ENCODE measurements at regions of chr6 and their contacts with region 1.

Region 1: DNA sequence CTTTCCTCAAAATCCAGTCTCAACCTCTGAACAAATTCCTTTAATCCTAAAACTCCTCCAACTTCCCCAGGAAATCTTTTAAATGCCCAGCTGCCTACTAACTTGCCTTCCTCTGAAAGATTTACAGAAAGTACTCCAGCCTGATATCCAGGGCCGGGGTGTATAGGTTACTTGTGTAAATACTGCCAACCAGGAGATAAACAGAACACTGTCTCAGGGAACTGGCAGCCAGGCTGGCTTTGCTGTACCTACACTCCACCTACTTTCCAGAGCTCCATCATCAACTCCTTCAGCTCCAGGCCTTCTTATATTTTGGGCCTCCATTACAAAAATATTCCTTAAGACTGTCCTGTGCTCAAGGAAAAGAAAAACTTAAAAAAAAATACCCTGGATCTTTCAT is 85.9 kb downstream of the CEP162 start:
- DNase-seq: no peak
- ATAC-seq: no peak
- H3K4me3 ChIP-seq: no peak overlapping the region
- H3K4me3 Mint-ChIP-seq: no peak overlapping the region
- H3K27ac ChIP-seq: no peak overlapping the region
- H3K27ac Mint-ChIP-seq: no peak overlapping the region
- H3K4me1 ChIP-seq: no peaks in the 10 kb centered on the region
- H3K4me1 Mint-ChIP-seq: no peaks in the 10 kb centered on the region
- H3K27me3 ChIP-seq: no peaks in the 10 kb centered on the region
- H3K27me3 Mint-ChIP-seq: no peaks in the 10 kb centered on the region
- CTCF ChIP-seq: no peak

Region 2: GRCh38 chr6:83092756-83093399 is 1048.6 kb before region 1 on chr6:
- CTCF ChIA-PET with region 1: no interaction called
- POLR2A ChIA-PET with region 1: no interaction called
- intact Hi-C with region 1: no loop called
- DNase-seq: no peak
- ATAC-seq: no peak
- H3K4me3 ChIP-seq: no peak overlapping the region
- H3K4me3 Mint-ChIP-seq: no peak overlapping the region
- H3K27ac ChIP-seq: no peak overlapping the region
- H3K27ac Mint-ChIP-seq: no peak overlapping the region
- H3K4me1 ChIP-seq: no peaks in the 10 kb centered on the region
- H3K4me1 Mint-ChIP-seq: peaks cover 14% of the 10 kb centered on the region
- H3K27me3 ChIP-seq: no peaks in the 10 kb centered on the region
- H3K27me3 Mint-ChIP-seq: no peaks in the 10 kb centered on the region
- CTCF ChIP-seq: no peak

Region 3: GRCh38 chr6:83696674-83697073 is 444.8 kb before region 1 on chr6:
- CTCF ChIA-PET with region 1: no interaction called
- POLR2A ChIA-PET with region 1: no interaction called
- intact Hi-C with region 1: loop called in 1 of 2 experiments (anchors 5 kb)
- DNase-seq: no peak
- ATAC-seq: no peak
- H3K4me3 ChIP-seq: no peak overlapping the region
- H3K4me3 Mint-ChIP-seq: no peak overlapping the region
- H3K27ac ChIP-seq: no peak overlapping the region
- H3K27ac Mint-ChIP-seq: no peak overlapping the region
- H3K4me1 ChIP-seq: no peaks in the 10 kb centered on the region
- H3K4me1 Mint-ChIP-seq: no peaks in the 10 kb centered on the region
- H3K27me3 ChIP-seq: peaks cover 0 to 3% of the 10 kb centered on the region in 2 experiments
- H3K27me3 Mint-ChIP-seq: peaks cover 4% of the 10 kb centered on the region
- CTCF ChIP-seq: no peak